Activated naive CD4-positive, alpha-beta T cell treated with anti-CD3 and anti-CD28 coated beads, Interleukin-2, amount 10 ng/mL, durations not matched to agents 7 days and 5 days (primary cell): ENCODE measurements at regions of chr7 and their contacts with region 1.

Region 1: DNA sequence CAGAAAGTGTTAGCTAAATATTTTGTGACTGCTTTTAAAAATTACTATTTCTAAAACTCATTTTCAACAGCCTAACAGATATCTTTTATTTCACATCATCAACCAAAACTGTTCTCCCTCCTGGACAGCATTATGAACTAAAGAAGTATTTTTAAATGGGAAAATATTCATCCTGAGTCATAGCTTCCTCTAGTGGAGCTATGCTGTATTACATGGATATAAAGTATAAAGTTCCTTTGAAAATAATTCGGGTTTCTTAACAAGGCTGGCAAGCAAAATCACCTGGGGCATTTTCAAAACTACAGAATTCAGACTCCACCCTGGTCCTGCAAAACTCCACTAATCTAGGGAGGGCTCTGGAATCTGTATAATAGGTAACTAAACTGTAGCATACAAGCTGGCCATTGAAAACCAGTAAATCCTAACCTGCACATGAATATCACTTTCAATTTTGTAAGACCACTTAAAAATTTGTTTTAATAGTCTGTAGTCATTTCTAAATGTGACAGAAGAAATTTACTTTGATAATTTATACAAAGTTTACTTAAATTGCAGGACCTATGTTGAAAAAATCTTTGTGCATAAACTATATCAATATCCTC is 53.5 kb downstream of the SCIN start:
- DNase-seq: no peak
- H3K4me3 Mint-ChIP-seq: no peak overlapping the region
- H3K27ac Mint-ChIP-seq: no peak overlapping the region
- H3K4me1 Mint-ChIP-seq: no peaks in the 10 kb centered on the region
- H3K27me3 Mint-ChIP-seq: no peaks in the 10 kb centered on the region

Region 2: DNA sequence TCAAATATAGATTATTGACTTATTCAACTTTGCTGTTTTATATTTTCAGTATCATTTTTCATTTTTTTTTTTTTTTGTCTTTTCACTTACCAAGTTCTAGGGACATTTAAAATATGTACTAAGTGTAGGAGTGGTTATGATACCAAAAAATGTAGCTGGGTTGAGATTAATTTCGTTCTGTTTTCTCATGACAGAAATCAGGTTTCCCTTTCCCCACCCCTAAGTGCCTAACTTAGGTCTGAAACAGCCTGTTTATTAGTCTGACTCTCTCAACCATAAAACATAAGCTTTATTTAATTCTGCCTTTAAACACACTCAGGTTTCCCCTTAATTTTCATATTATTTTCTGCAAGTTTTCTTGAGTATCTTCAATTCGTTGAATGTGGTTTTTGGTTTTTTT is 390.8 kb before region 1 on chr7:
- CTCF ChIA-PET with region 1: no interaction called
- DNase-seq: no peak
- H3K4me3 Mint-ChIP-seq: no peak overlapping the region
- H3K27ac Mint-ChIP-seq: no peak overlapping the region
- H3K4me1 Mint-ChIP-seq: no peaks in the 10 kb centered on the region
- H3K27me3 Mint-ChIP-seq: no peaks in the 10 kb centered on the region

Region 3: DNA sequence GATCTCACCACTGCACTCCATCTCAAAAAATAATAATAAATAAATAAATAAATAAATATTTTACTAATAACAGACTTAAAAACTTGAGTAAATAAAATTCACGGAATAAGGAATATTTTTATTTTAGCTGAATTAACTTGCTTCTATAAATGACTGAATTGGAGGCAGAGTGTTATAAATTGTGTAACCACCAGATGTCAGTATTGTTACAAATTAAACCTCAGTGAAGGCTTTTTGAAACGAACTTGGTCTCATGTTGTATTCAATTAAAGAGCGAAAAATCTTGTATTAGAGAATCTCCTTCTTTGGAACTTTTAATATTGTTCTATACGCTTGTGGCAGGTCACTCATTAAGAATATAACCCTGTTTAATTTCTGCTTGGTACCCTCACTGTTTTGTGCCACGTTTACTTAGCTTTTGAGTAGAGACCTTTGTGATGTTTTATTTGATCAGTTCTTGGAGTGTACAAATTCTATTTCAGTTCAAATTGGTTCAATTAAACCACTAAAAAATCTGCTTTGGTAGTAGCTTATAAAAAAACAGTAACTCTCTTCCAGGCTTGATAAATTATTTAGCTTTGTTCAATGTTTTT is 99.1 kb before region 1 on chr7:
- CTCF ChIA-PET with region 1: interaction called, 51 read pairs
- DNase-seq: no peak
- H3K4me3 Mint-ChIP-seq: no peak overlapping the region
- H3K27ac Mint-ChIP-seq: no peak overlapping the region
- H3K4me1 Mint-ChIP-seq: no peaks in the 10 kb centered on the region
- H3K27me3 Mint-ChIP-seq: peaks cover 3% of the 10 kb centered on the region